ENCODE measurements at regions of chr18 and their contacts with region 1.

Region 1: GRCh38 chr18:62714671-62715435 is 488 bp upstream of the PHLPP1 start:
- DNase-seq: peak; percentile 82 to 91 (median 88)
- ATAC-seq: peak; percentile 86
- H3K4me3 ChIP-seq: peak overlapping the region; percentile 84
- H3K4me3 Mint-ChIP-seq: peak overlapping the region; percentile 80 to 96 (median 90)
- H3K27ac ChIP-seq: peak overlapping the region; percentile 78
- H3K27ac Mint-ChIP-seq: peak overlapping the region; percentile 84 to 99 (median 95)
- H3K4me1 ChIP-seq: peaks cover 0 to 12% of the 10 kb centered on the region in 2 donors
- H3K4me1 Mint-ChIP-seq: peaks cover 11 to 34% (median 30%) of the 10 kb centered on the region in 7 donors
- H3K27me3 ChIP-seq: no peaks in the 10 kb centered on the region
- H3K27me3 Mint-ChIP-seq: peaks cover 0 to 22% (median 0%) of the 10 kb centered on the region in 5 donors

Region 2: DNA sequence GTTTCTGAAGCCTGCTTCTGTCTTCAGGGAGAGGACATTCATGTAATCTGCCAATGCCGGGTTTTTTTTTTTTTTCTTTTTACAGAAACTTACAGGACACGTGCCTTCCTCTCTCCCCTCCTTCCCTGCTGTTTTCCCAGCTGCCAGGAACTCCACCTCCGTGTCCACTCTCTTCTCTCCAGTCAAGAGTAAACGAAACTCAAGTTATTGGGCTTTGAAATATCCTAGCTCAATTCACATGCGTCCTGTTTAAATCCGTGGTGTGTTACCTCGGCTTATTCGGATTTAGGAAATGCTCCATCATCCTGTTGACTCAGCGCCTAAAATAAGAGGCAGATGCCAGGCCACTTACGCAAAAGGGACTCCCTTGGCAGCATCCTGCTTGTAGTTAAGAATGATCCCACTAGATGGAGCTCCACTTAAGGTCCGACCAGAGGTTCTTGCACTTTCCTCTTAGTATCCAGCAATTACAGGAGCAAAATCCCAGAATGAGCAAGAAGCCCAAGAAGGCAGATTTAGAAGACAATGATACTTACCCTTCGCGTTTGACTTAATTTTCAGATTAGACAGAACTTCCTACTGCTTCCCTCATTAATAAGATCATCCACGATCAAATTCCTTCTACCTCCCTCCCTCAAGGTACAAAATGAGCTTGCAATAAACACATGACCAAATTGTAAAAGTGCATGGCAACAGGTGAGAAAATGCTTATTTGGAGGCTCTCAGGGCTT is 289.2 kb before region 1 on chr18:
- CTCF ChIA-PET with region 1: no interaction called
- POLR2A ChIA-PET with region 1: no interaction called
- intact Hi-C with region 1: loop called (anchors 1 kb)
- DNase-seq: peak in 8 of 9 donors; percentile 41 to 67 (median 57)
- ATAC-seq: peak; percentile 82
- H3K4me3 ChIP-seq: no peak overlapping the region
- H3K4me3 Mint-ChIP-seq: peak overlapping the region in 1 of 10 donors; percentile 52
- H3K27ac ChIP-seq: no peak overlapping the region
- H3K27ac Mint-ChIP-seq: peak overlapping the region in 5 of 9 donors; percentile 16 to 64 (median 39)
- H3K4me1 ChIP-seq: peaks cover 0 to 6% of the 10 kb centered on the region in 2 donors
- H3K4me1 Mint-ChIP-seq: peaks cover 11 to 54% (median 18%) of the 10 kb centered on the region in 7 donors
- H3K27me3 ChIP-seq: no peaks in the 10 kb centered on the region
- H3K27me3 Mint-ChIP-seq: peaks cover 0 to 4% (median 2%) of the 10 kb centered on the region in 5 donors

Region 3: DNA sequence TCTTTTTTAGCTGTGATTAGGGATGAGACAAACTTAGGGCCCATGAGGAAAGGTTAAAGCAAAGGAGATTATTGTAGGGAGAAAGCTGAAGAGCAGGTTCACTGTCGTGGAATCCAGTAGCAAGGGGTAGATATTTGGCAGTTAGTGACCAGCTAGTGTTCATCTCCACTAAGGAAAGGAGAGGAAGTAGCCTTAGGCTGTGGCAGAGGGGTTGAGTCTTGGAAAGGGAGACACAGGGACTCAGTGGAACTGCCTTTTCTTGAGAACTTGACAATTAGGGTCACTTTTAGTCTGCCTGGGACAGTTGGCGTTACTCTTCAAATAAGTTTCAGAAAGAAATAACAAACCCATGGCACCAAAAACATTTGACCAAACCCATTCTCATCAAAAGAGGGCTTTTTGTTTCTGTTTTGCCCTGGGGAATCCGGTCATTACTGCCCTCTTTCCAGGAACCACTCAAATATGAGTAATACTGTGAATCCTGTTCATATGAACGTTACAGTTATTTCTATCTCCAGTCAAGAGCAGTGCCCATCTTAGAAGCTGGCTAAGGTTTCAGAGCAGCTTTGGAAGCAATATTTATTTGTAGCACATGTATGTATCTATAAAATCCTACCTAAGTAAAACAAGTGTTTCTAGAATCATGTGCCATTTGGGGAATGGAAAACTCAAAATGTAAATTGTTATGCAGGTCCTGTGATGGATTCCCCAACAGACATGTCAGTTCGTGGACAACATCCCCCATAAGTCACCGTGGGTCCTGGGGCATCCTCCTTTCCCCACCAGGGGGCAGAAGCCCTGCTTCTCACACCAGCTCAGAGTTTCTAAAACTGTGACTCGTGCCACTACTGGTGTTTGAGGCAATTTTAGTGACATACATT is 76.8 kb before region 1 on chr18:
- CTCF ChIA-PET with region 1: no interaction called
- POLR2A ChIA-PET with region 1: no interaction called
- intact Hi-C with region 1: loop called in 1 of 2 experiments (anchors 2 kb)
- DNase-seq: peak; percentile 7 to 49 (median 27)
- ATAC-seq: peak; percentile 76
- H3K4me3 ChIP-seq: no peak overlapping the region
- H3K4me3 Mint-ChIP-seq: no peak overlapping the region
- H3K27ac ChIP-seq: no peak overlapping the region
- H3K27ac Mint-ChIP-seq: no peak overlapping the region
- H3K4me1 ChIP-seq: no peaks in the 10 kb centered on the region
- H3K4me1 Mint-ChIP-seq: peaks cover 0 to 14% (median 0%) of the 10 kb centered on the region in 7 donors
- H3K27me3 ChIP-seq: no peaks in the 10 kb centered on the region
- H3K27me3 Mint-ChIP-seq: peaks cover 18 to 30% (median 24%) of the 10 kb centered on the region in 5 donors

Region 4: GRCh38 chr18:62741118-62741566 is 26.3 kb after region 1 on chr18:
- CTCF ChIA-PET with region 1: no interaction called
- POLR2A ChIA-PET with region 1: no interaction called
- intact Hi-C with region 1: no loop called
- DNase-seq: no peak
- ATAC-seq: no peak
- H3K4me3 ChIP-seq: no peak overlapping the region
- H3K4me3 Mint-ChIP-seq: no peak overlapping the region
- H3K27ac ChIP-seq: no peak overlapping the region
- H3K27ac Mint-ChIP-seq: no peak overlapping the region
- H3K4me1 ChIP-seq: no peaks in the 10 kb centered on the region
- H3K4me1 Mint-ChIP-seq: peaks cover 0 to 11% (median 8%) of the 10 kb centered on the region in 7 donors
- H3K27me3 ChIP-seq: no peaks in the 10 kb centered on the region
- H3K27me3 Mint-ChIP-seq: no peaks in the 10 kb centered on the region

Region 5: GRCh38 chr18:62844850-62845643 is 130.2 kb after region 1 on chr18:
- CTCF ChIA-PET with region 1: no interaction called
- POLR2A ChIA-PET with region 1: no interaction called
- intact Hi-C with region 1: loop called in 1 of 2 experiments (anchors 5 kb)
- DNase-seq: no peak
- ATAC-seq: no peak
- H3K4me3 ChIP-seq: no peak overlapping the region
- H3K4me3 Mint-ChIP-seq: peak overlapping the region in 1 of 10 donors; percentile 83
- H3K27ac ChIP-seq: no peak overlapping the region
- H3K27ac Mint-ChIP-seq: peak overlapping the region in 1 of 9 donors; percentile 90
- H3K4me1 ChIP-seq: no peaks in the 10 kb centered on the region
- H3K4me1 Mint-ChIP-seq: peaks cover 0 to 33% (median 0%) of the 10 kb centered on the region in 7 donors
- H3K27me3 ChIP-seq: no peaks in the 10 kb centered on the region
- H3K27me3 Mint-ChIP-seq: no peaks in the 10 kb centered on the region

Region 6: GRCh38 chr18:63074981-63075404 is 360.1 kb after region 1 on chr18:
- CTCF ChIA-PET with region 1: no interaction called
- POLR2A ChIA-PET with region 1: no interaction called
- intact Hi-C with region 1: loop called (anchors 1 to 10 kb)
- DNase-seq: peak; percentile 19 to 68 (median 42)
- ATAC-seq: peak; percentile 80
- H3K4me3 ChIP-seq: peak overlapping the region; percentile 66
- H3K4me3 Mint-ChIP-seq: peak overlapping the region; percentile 70 to 95 (median 86)
- H3K27ac ChIP-seq: no peak overlapping the region
- H3K27ac Mint-ChIP-seq: peak overlapping the region in 8 of 9 donors; percentile 0 to 85 (median 65)
- H3K4me1 ChIP-seq: no peaks in the 10 kb centered on the region
- H3K4me1 Mint-ChIP-seq: peaks cover 0 to 13% (median 12%) of the 10 kb centered on the region in 7 donors
- H3K27me3 ChIP-seq: no peaks in the 10 kb centered on the region
- H3K27me3 Mint-ChIP-seq: peaks cover 0 to 23% (median 10%) of the 10 kb centered on the region in 5 donors

Region 7: GRCh38 chr18:63367053-63367953 is 652.5 kb after region 1 on chr18 and contains the start of gene KDSR:
- CTCF ChIA-PET with region 1: no interaction called
- POLR2A ChIA-PET with region 1: interaction called, 3 read pairs
- intact Hi-C with region 1: loop called (anchors 1 to 2 kb)
- DNase-seq: peak; percentile 71 to 90 (median 79)
- ATAC-seq: peak; percentile 92
- H3K4me3 ChIP-seq: peak within 1 kb of the TSS; percentile 92
- H3K4me3 Mint-ChIP-seq: peak within 1 kb of the TSS; percentile 85 to 99 (median 94)
- H3K27ac ChIP-seq: peak within 1 kb of the TSS; percentile 77
- H3K27ac Mint-ChIP-seq: peak within 1 kb of the TSS; percentile 84 to 92 (median 89)
- H3K4me1 ChIP-seq: peaks cover 6 to 29% of the 10 kb centered on the region in 2 donors
- H3K4me1 Mint-ChIP-seq: peaks cover 32 to 56% (median 41%) of the 10 kb centered on the region in 7 donors
- H3K27me3 ChIP-seq: no peaks in the 10 kb centered on the region
- H3K27me3 Mint-ChIP-seq: no peaks in the 10 kb centered on the region
- total RNA-seq, gene KDSR: 24.4 to 57.9 (median 46.9) TPM